ENCODE measurements at regions of chrX and their contacts with region 1.

Region 1: GRCh38 chrX:78747489-78747888 is at the start of gene LPAR4:
- DNase-seq: no peak
- H3K4me3 Mint-ChIP-seq: no peak within 1 kb of the TSS
- H3K27ac Mint-ChIP-seq: no peak within 1 kb of the TSS
- H3K4me1 Mint-ChIP-seq: no peaks in the 10 kb centered on the region
- H3K27me3 Mint-ChIP-seq: no peaks in the 10 kb centered on the region
- CTCF ChIP-seq: no peak
- total RNA-seq, gene LPAR4: not detected in 2 replicates

Region 2: DNA sequence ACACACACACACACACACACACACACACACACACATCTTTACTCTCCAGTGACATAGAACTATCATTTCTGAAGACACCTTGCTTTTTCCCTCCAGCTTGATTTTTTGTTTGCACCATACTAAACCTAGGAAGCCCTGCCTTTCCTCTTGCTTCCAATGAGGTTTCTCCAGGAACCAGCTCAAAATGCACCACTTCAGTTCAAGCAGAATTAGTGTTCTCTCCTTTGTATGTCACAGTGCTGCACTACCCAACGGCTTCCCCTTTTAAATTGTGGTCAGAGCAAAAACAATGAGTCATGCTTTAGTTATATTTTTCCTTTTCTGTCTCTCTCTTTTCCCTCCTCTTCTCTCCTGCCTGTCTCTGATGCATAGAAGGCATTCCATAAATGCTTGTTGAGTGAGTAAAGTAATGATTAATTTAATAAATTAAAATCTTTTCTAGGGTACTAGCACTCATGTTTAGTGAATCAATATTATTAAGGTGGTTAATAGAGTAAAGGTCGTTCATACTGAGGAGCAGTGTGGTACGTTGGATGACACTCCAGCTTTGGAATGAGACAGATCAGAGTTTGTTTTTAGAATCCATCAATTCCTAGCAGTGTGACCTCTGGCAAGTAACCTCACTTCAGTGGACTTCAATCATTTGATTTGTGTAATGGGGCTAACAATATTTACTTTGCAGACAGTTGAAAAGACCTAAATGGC is 94.2 kb before region 1 on chrX:
- CTCF ChIA-PET with region 1: no interaction called
- intact Hi-C with region 1: no loop called
- DNase-seq: peak; percentile 11
- H3K4me3 Mint-ChIP-seq: peak overlapping the region; percentile 24
- H3K27ac Mint-ChIP-seq: peak overlapping the region; percentile 69
- H3K4me1 Mint-ChIP-seq: peaks cover 10% of the 10 kb centered on the region
- H3K27me3 Mint-ChIP-seq: no peaks in the 10 kb centered on the region
- CTCF ChIP-seq: no peak

Region 3: GRCh38 chrX:78822157-78822690 is 74.7 kb after region 1 on chrX:
- CTCF ChIA-PET with region 1: no interaction called
- intact Hi-C with region 1: no loop called
- DNase-seq: no peak
- H3K4me3 Mint-ChIP-seq: no peak overlapping the region
- H3K27ac Mint-ChIP-seq: no peak overlapping the region
- H3K4me1 Mint-ChIP-seq: no peaks in the 10 kb centered on the region
- H3K27me3 Mint-ChIP-seq: no peaks in the 10 kb centered on the region
- CTCF ChIP-seq: no peak

Region 4: DNA sequence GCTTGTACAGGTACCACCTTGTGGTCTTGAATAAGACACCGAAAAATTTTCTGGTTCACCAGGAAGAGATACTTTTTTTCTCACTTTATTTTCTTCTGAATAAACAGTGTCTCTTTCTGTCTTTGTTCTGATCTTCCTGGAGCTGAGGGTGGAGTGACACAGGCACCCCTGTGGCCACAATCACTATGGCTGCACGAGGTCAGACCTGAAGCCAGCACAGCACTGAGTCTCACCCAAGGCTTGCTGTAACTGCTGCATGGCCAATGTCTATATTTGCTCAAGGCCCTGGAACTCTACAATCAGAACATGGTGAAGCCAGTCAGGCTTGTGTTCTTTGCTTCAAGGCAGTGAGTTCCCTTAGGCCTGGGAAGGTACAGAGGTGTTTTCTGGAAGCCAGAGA is 484.2 kb after region 1 on chrX:
- CTCF ChIA-PET with region 1: interaction called, 11 read pairs
- intact Hi-C with region 1: no loop called
- DNase-seq: no peak
- H3K4me3 Mint-ChIP-seq: no peak overlapping the region
- H3K27ac Mint-ChIP-seq: no peak overlapping the region
- H3K4me1 Mint-ChIP-seq: no peaks in the 10 kb centered on the region
- H3K27me3 Mint-ChIP-seq: no peaks in the 10 kb centered on the region
- CTCF ChIP-seq: no peak